CD14-positive monocyte (primary cell): ENCODE measurements at regions of chr1 and their contacts with region 1.

Region 1: GRCh38 chr1:93179886-93180722 is at the start of gene TMED5:
- DNase-seq: peak; percentile 98
- H3K4me3 ChIP-seq: peak within 1 kb of the TSS; percentile 70 to 98 (median 87)
- H3K4me3 Mint-ChIP-seq: peak within 1 kb of the TSS; percentile 98 to 99
- H3K27ac ChIP-seq: peak within 1 kb of the TSS; percentile 98 to 99
- H3K27ac Mint-ChIP-seq: peak within 1 kb of the TSS; percentile 99 to 100 (median 100)
- H3K4me1 ChIP-seq: peaks cover 31 to 44% of the 10 kb centered on the region in 2 donors
- H3K4me1 Mint-ChIP-seq: peaks cover 40% of the 10 kb centered on the region
- H3K27me3 ChIP-seq: no peaks in the 10 kb centered on the region
- H3K27me3 Mint-ChIP-seq: no peaks in the 10 kb centered on the region
- CTCF ChIP-seq: peak; percentile 15
- polyA plus RNA-seq, gene TMED5: 30.0 to 75.8 (median 62.8) TPM

Region 2: DNA sequence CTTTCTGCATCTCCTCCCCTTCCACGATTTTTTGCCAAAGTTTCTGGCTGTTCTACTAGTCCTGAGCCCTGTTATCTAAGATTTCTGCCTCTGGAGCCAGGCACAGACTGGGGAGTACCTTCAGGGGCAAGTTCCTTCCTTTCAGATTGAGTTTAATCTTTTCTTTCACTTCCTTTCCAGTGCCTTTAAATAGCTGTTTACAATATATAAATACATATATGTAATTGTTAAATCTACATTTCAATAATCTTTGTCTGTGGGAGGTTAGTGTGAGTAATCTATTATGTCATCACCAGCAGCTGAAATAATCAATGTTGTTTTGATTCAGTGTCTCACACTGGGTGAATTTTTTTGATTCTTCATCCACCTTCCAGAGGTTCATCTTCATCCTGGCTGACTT is 250.6 kb before region 1 on chr1:
- intact Hi-C with region 1: no loop called
- DNase-seq: no peak
- H3K4me3 ChIP-seq: no peak overlapping the region
- H3K4me3 Mint-ChIP-seq: no peak overlapping the region
- H3K27ac ChIP-seq: no peak overlapping the region
- H3K27ac Mint-ChIP-seq: peak overlapping the region in 1 of 7 donors; percentile 8
- H3K4me1 ChIP-seq: peaks cover 22 to 30% of the 10 kb centered on the region in 2 donors
- H3K4me1 Mint-ChIP-seq: peaks cover 29% of the 10 kb centered on the region
- H3K27me3 ChIP-seq: no peaks in the 10 kb centered on the region
- H3K27me3 Mint-ChIP-seq: no peaks in the 10 kb centered on the region
- CTCF ChIP-seq: no peak

Region 3: GRCh38 chr1:93021539-93022134 is 158.5 kb before region 1 on chr1:
- intact Hi-C with region 1: no loop called
- DNase-seq: peak; percentile 12 to 58 (median 47)
- H3K4me3 ChIP-seq: no peak overlapping the region
- H3K4me3 Mint-ChIP-seq: no peak overlapping the region
- H3K27ac ChIP-seq: no peak overlapping the region
- H3K27ac Mint-ChIP-seq: no peak overlapping the region
- H3K4me1 ChIP-seq: no peaks in the 10 kb centered on the region
- H3K4me1 Mint-ChIP-seq: peaks cover 4% of the 10 kb centered on the region
- H3K27me3 ChIP-seq: no peaks in the 10 kb centered on the region
- H3K27me3 Mint-ChIP-seq: peaks cover 2% of the 10 kb centered on the region in 3 donors
- CTCF ChIP-seq: peak; percentile 89

Region 4: DNA sequence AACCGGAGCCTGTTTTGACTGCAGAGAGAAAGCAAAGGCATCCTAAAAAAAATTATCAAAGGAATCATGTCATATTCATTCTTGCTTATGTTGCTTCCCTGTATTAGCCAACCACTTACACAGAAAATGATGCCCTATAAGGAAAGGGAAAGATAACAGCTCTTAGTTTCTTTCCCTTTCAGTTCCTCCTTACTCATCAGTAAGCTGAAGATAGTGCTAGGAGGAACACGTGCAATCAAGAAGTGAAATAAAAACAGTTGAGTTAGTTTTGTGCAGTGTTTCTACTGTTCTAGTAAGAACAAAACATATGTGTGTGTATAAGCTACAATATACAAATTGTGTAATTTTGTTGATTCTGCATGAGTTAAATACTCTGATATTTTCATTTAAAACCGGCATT is 146.3 kb before region 1 on chr1:
- intact Hi-C with region 1: no loop called
- DNase-seq: peak; percentile 34 to 55 (median 48)
- H3K4me3 ChIP-seq: no peak overlapping the region
- H3K4me3 Mint-ChIP-seq: no peak overlapping the region
- H3K27ac ChIP-seq: peak overlapping the region in 1 of 2 donors; percentile 49
- H3K27ac Mint-ChIP-seq: peak overlapping the region in 6 of 7 donors; percentile 30 to 81 (median 58)
- H3K4me1 ChIP-seq: peaks cover 30 to 33% of the 10 kb centered on the region in 2 donors
- H3K4me1 Mint-ChIP-seq: peaks cover 43% of the 10 kb centered on the region
- H3K27me3 ChIP-seq: no peaks in the 10 kb centered on the region
- H3K27me3 Mint-ChIP-seq: peaks cover 0 to 5% (median 2%) of the 10 kb centered on the region in 3 donors
- CTCF ChIP-seq: no peak

Region 5: DNA sequence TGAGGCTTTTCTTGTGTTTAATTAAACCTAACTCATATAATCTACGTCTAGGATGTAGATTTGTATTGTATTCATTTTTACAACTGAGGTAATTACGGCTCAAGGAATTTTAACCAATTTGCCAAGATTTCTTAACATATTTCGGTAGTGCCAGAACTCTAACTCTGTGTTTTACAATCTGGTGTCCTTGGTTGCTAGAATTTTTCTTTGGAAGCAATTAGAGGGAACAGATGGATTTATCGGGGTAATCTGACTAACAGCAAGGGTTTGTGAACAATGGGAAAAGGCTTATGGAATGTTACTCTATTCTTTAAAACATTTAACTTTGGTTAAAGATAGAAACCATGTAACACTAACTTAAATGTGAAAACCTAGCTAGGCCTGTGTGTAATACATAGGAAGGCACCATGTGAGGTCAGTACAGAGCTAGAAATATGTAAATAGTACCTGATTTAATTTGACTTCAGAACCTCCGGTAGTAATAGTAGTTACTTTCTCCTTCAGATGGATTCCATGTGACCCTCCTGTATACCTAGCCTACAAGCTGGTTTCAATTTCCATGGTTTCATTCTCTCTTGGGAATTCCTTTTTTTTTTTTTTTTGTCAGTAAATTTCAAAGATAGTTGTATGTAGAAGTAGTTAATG is 99.8 kb before region 1 on chr1:
- intact Hi-C with region 1: loop called in 1 of 2 experiments (anchors 5 kb)
- DNase-seq: peak; percentile 21 to 56 (median 47)
- H3K4me3 ChIP-seq: peak overlapping the region; percentile 65 to 98 (median 74)
- H3K4me3 Mint-ChIP-seq: peak overlapping the region; percentile 95 to 99
- H3K27ac ChIP-seq: peak overlapping the region in 1 of 2 donors; percentile 97
- H3K27ac Mint-ChIP-seq: peak overlapping the region; percentile 92 to 98 (median 95)
- H3K4me1 ChIP-seq: peaks cover 50 to 64% of the 10 kb centered on the region in 2 donors
- H3K4me1 Mint-ChIP-seq: peaks cover 64% of the 10 kb centered on the region
- H3K27me3 ChIP-seq: no peaks in the 10 kb centered on the region
- H3K27me3 Mint-ChIP-seq: peaks cover 0 to 1% (median 0%) of the 10 kb centered on the region in 3 donors
- CTCF ChIP-seq: peak; percentile 68

Region 6: GRCh38 chr1:93345633-93346420 is 165.7 kb after region 1 on chr1 and contains the start of gene DR1:
- intact Hi-C with region 1: loop called in 1 of 2 experiments (anchors 5 kb)
- DNase-seq: peak; percentile 82 to 87 (median 86)
- H3K4me3 ChIP-seq: peak within 1 kb of the TSS; percentile 80 to 99 (median 97)
- H3K4me3 Mint-ChIP-seq: peak within 1 kb of the TSS; percentile 99 to 100
- H3K27ac ChIP-seq: peak within 1 kb of the TSS; percentile 95 to 98
- H3K27ac Mint-ChIP-seq: peak within 1 kb of the TSS; percentile 96 to 99 (median 98)
- H3K4me1 ChIP-seq: peaks cover 20 to 43% of the 10 kb centered on the region in 2 donors
- H3K4me1 Mint-ChIP-seq: peaks cover 41% of the 10 kb centered on the region
- H3K27me3 ChIP-seq: no peaks in the 10 kb centered on the region
- H3K27me3 Mint-ChIP-seq: no peaks in the 10 kb centered on the region
- CTCF ChIP-seq: no peak
- polyA plus RNA-seq, gene DR1: 13.5 to 61.8 (median 61.0) TPM